ENCODE measurements at regions of chr12 and their contacts with region 1.

Region 1: DNA sequence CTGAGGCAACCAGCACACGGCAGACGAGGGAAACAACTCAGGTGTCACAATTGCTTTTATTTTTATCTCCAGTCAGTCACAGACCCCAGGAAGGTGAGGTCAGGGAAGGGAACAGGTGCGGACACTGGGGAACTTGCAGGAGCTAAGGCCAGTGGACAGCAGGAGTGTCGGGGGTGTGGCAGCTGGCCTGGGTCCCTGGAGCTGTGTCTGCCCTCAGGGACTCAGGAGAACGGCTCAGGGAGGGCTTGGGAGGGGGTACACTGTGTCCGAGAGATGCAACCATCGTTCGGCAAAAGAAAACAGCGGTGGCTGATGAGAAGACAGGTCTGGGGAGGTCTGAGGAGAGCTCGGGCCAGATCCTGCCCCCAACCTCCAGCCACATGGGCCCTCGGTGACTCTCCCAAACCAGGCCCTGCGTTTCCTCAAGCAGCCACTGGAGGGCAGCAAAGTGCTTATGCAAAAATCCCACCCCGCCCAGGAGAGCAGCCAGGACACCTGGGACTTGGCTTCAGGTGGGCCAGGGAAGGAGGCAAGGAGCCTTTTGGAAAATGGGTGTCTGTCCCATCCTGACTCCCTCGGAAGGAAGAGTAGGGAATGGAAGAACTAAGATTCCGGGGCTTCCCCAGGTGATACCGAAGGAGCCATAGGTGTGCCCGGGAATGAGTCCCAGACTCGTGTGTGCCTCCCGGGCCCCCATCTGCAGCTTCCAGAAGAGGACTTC is 24.1 kb upstream of the BCDIN3D start:
- DNase-seq: peak; percentile 72 to 77
- ATAC-seq: peak in 7 of 8 donors; percentile 4 to 40 (median 20)
- H3K4me3 ChIP-seq: no peak overlapping the region
- H3K27ac ChIP-seq: peak overlapping the region in 1 of 10 donors; percentile 67
- H3K4me1 ChIP-seq: peaks cover 22 to 40% (median 30%) of the 10 kb centered on the region in 9 donors
- H3K27me3 ChIP-seq: peaks cover 0 to 15% (median 6%) of the 10 kb centered on the region in 7 donors
- CTCF ChIP-seq: peak; percentile 95 to 99 (median 97)

Region 2: GRCh38 chr12:49893753-49894752 is 27.0 kb after region 1 on chr12:
- intact Hi-C with region 1: no loop called
- DNase-seq: no peak
- ATAC-seq: no peak
- H3K4me3 ChIP-seq: no peak overlapping the region
- H3K27ac ChIP-seq: no peak overlapping the region
- H3K4me1 ChIP-seq: no peaks in the 10 kb centered on the region
- H3K27me3 ChIP-seq: peaks cover 0 to 16% (median 4%) of the 10 kb centered on the region in 7 donors
- CTCF ChIP-seq: no peak

Region 3: GRCh38 chr12:49945394-49946080 is 78.5 kb after region 1 on chr12:
- intact Hi-C with region 1: loop called in 8 of 10 experiments (anchors 1 to 10 kb)
- DNase-seq: peak; percentile 81 to 87
- ATAC-seq: peak; percentile 94 to 97 (median 96)
- H3K4me3 ChIP-seq: peak overlapping the region in 8 of 10 donors; percentile 13 to 44 (median 36)
- H3K27ac ChIP-seq: peak overlapping the region in 5 of 10 donors; percentile 15 to 65 (median 53)
- H3K4me1 ChIP-seq: peaks cover 0 to 26% (median 10%) of the 10 kb centered on the region in 9 donors
- H3K27me3 ChIP-seq: peaks cover 0 to 12% (median 0%) of the 10 kb centered on the region in 7 donors
- CTCF ChIP-seq: peak; percentile 72 to 97 (median 95)

Region 4: DNA sequence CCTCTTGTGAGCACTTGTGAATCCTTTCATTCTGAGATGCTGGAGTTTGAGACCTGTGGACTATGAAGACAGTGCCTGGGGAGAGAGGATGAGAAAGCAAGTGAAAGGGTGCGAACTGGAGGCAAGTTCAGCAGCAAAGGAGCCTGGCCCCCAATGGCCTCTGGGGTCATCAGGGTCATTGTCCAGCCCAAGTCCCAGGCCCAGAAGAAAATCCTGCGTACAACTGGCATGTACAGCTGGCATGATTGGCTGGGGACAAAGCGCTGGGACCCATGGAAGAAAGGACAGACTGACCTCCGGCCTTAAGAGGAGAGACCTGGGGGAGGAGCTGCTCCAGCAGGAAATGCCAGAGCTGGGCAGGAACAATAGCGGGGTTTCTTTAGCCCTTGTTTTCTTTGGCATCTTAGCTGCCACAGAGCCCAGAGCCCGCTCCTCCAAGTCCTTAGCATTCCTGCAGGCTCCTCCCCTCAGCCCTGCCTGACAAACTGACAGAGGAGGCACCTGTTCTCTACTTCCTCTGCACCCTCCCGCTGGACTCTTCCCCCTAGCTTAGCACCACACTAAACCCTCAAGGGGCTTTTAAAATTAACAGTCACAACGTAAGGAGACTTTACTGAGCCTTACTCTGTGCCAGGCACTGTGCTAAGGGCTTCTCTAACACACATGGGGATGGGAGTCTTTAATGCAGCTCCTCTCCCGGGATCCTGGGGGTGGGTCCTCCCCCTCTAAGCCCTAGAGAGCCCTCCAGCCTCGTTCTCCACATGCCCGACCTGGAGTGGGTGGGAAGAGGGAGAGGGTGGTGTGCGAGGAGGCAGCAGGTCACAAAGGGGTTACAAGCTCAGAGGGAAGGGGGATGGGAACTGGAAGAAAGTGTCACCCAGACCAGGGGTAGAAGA is 92.8 kb after region 1 on chr12:
- intact Hi-C with region 1: loop called in 8 of 10 experiments (anchors 2 to 10 kb)
- DNase-seq: no peak
- ATAC-seq: peak in 1 of 8 donors; percentile 14
- H3K4me3 ChIP-seq: no peak overlapping the region
- H3K27ac ChIP-seq: no peak overlapping the region
- H3K4me1 ChIP-seq: peaks cover 3 to 46% (median 12%) of the 10 kb centered on the region in 9 donors
- H3K27me3 ChIP-seq: peaks cover 0 to 97% (median 56%) of the 10 kb centered on the region in 7 donors
- CTCF ChIP-seq: no peak

Region 5: GRCh38 chr12:49967042-49967776 is 100.2 kb after region 1 on chr12:
- intact Hi-C with region 1: loop called in 8 of 10 experiments (anchors 2 to 5 kb)
- DNase-seq: peak; percentile 88 to 93
- ATAC-seq: peak; percentile 72 to 90 (median 84)
- H3K4me3 ChIP-seq: peak overlapping the region in 9 of 10 donors; percentile 26 to 50 (median 42)
- H3K27ac ChIP-seq: no peak overlapping the region
- H3K4me1 ChIP-seq: peaks cover 5 to 26% (median 9%) of the 10 kb centered on the region in 9 donors
- H3K27me3 ChIP-seq: peaks cover 0 to 69% (median 27%) of the 10 kb centered on the region in 7 donors
- CTCF ChIP-seq: peak; percentile 68 to 90 (median 78)

Region 6: GRCh38 chr12:50050410-50051098 is 183.5 kb after region 1 on chr12:
- intact Hi-C with region 1: loop called in 9 of 10 experiments (anchors 5 to 10 kb)
- DNase-seq: peak; percentile 41 to 73
- ATAC-seq: peak; percentile 68 to 90 (median 78)
- H3K4me3 ChIP-seq: peak overlapping the region in 9 of 10 donors; percentile 10 to 46 (median 39)
- H3K27ac ChIP-seq: peak overlapping the region in 2 of 10 donors; percentile 4 to 52
- H3K4me1 ChIP-seq: peaks cover 0 to 18% (median 12%) of the 10 kb centered on the region in 9 donors
- H3K27me3 ChIP-seq: peaks cover 0 to 19% (median 4%) of the 10 kb centered on the region in 7 donors
- CTCF ChIP-seq: no peak

Region 7: DNA sequence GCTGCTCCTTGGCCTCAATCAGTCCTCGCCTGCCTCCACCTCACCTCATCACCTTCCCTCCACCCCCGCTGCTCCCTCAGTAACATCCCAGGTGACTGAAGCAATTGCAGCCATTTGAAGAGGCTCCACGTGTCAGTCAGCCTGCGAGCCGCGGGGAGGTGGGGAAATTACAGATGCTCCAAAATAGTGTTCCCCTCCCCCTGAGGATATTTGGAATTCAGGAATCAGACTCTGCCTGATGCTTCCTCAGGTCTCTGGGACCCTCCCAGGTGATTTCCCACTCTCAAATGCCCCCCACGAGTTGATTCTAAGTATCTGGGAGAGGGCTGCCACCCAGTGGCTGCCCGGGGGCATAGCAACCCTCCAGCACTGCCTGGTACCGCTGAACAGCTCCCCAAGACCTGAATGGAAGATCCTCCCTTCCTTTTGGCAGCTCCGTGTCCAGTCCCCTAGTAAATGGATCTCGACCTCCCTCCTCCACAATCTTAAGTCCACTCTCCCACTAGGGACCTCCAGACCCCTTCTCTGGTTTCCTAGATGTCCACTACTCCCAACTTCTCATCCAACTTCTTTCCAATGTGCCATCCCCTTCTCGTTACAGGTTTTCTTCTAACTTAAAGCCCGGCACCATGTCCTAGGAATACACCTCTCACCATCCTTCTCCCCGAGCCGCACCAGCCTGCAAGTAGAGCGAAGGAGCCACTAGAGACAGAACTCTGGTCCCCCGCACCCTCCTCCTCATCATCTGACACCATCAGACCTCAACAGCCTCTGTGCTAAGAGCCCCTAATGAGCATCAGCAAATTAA is 189.0 kb after region 1 on chr12:
- intact Hi-C with region 1: loop called (anchors 5 to 10 kb)
- DNase-seq: peak in 1 of 2 donors; percentile 26
- ATAC-seq: peak in 7 of 8 donors; percentile 44 to 73 (median 61)
- H3K4me3 ChIP-seq: no peak overlapping the region
- H3K27ac ChIP-seq: no peak overlapping the region
- H3K4me1 ChIP-seq: peaks cover 2 to 48% (median 20%) of the 10 kb centered on the region in 9 donors
- H3K27me3 ChIP-seq: peaks cover 0 to 39% (median 19%) of the 10 kb centered on the region in 7 donors
- CTCF ChIP-seq: peak; percentile 80 to 97 (median 95)

Region 8: GRCh38 chr12:50074936-50075807 is 208.2 kb after region 1 on chr12:
- intact Hi-C with region 1: loop called in 3 of 10 experiments (anchors 5 kb)
- DNase-seq: peak; percentile 84 to 85
- ATAC-seq: peak; percentile 84 to 92 (median 88)
- H3K4me3 ChIP-seq: no peak overlapping the region
- H3K27ac ChIP-seq: no peak overlapping the region
- H3K4me1 ChIP-seq: peaks cover 3 to 13% (median 6%) of the 10 kb centered on the region in 9 donors
- H3K27me3 ChIP-seq: no peaks in the 10 kb centered on the region
- CTCF ChIP-seq: peak; percentile 76 to 97 (median 94)